Aorta (tissue), 5 donors: ENCODE measurements at regions of chr10 and their contacts with region 1.

Region 1: GRCh38 chr10:82757891-82758290 is 882.9 kb downstream of the NRG3 start:
- DNase-seq: no peak
- ATAC-seq: no peak
- H3K4me3 ChIP-seq: no peak overlapping the region
- H3K27ac ChIP-seq: no peak overlapping the region
- H3K4me1 ChIP-seq: no peaks in the 10 kb centered on the region
- H3K27me3 ChIP-seq: no peaks in the 10 kb centered on the region

Region 2: GRCh38 chr10:81479316-81479715 is 1278.6 kb before region 1 on chr10:
- intact Hi-C with region 1: loop called in 1 of 2 experiments (anchors 10 kb)
- DNase-seq: no peak
- ATAC-seq: no peak
- H3K4me3 ChIP-seq: no peak overlapping the region
- H3K27ac ChIP-seq: no peak overlapping the region
- H3K4me1 ChIP-seq: no peaks in the 10 kb centered on the region
- H3K27me3 ChIP-seq: no peaks in the 10 kb centered on the region

Region 3: GRCh38 chr10:82850191-82850590 is 92.3 kb after region 1 on chr10:
- intact Hi-C with region 1: no loop called
- DNase-seq: no peak
- ATAC-seq: no peak
- H3K4me3 ChIP-seq: no peak overlapping the region
- H3K27ac ChIP-seq: no peak overlapping the region
- H3K4me1 ChIP-seq: no peaks in the 10 kb centered on the region
- H3K27me3 ChIP-seq: no peaks in the 10 kb centered on the region

Region 4: DNA sequence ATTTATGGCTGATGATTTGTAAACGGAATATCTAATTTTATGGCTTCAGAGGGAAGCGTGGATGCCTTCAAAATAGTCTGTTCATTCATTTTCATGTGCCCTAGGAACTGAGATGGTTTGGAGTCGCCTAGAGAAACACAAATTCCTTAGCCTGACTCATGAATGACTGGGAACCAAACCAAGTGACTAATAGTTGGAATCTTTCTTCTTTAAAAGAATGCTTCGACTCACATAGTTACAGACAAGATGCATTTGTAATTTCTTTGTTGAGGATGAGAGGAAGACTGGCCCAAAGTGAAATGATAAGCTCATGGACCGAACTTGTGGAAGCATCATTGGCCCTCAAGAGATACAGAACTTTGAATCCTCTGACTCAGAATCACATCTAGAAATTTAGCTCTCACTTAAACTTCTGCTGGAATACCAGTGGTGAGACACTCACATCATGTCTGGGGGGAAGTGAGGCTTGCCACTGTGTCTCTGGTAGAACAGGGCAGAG is 224.3 kb after region 1 on chr10:
- intact Hi-C with region 1: no loop called
- DNase-seq: no peak
- ATAC-seq: peak; percentile 62
- H3K4me3 ChIP-seq: no peak overlapping the region
- H3K27ac ChIP-seq: peak overlapping the region in 1 of 2 donors; percentile 25
- H3K4me1 ChIP-seq: no peaks in the 10 kb centered on the region
- H3K27me3 ChIP-seq: no peaks in the 10 kb centered on the region